ENCODE measurements at regions of chr4 and their contacts with region 1.

Region 1: GRCh38 chr4:40056716-40057585 is at the start of gene N4BP2:
- DNase-seq: peak; percentile 40 to 61
- ATAC-seq: peak; percentile 69
- H3K4me3 ChIP-seq: peak within 1 kb of the TSS; percentile 77 to 99 (median 85)
- H3K27ac ChIP-seq: peak within 1 kb of the TSS; percentile 94 to 99 (median 96)
- H3K4me1 ChIP-seq: peaks cover 3 to 13% of the 10 kb centered on the region in 2 donors
- H3K27me3 ChIP-seq: no peaks in the 10 kb centered on the region
- CTCF ChIP-seq: peak in 4 of 5 experiments; percentile 41 to 87 (median 68)
- POLR2A ChIP-seq: peak; percentile 78 to 87
- total RNA-seq, gene N4BP2: 1.3 to 7.0 (median 3.3) TPM

Region 2: DNA sequence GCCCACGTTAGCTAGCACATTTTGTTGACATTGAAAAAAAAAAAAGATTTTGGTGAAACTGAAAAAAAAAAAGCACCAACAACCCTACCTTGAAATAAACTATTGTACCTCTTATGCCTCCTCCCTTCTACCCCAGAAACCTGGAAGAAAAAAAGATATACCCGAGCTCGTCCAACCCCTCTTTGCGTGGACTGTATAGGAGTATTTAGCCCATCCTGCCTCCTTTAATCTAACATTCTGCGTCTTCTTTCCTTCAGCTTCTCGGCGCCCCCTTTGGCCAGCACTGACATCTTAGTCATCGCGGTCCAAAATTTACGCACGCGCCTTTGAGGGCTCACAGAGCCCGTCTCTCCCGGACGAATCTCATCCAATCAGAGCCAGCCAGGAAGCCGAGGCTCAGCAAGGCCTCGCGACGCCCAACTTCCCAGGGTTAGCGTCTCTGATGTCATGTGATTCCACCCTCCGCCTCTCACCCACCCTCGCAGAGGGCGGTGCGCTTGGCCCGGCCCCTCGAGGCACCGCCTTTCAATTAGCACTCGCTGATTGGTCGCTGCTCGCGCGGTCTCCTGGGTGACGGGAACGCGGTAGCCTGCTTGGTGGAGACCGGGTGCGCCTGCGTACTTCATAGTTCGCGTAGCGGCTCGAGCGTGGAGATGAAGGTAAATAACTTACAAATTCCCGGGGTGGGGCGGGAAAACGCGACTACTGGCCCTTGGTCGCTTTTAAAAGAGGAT is 874.9 kb before region 1 on chr4 and contains the start of gene WDR19:
- in situ Hi-C with region 1: no loop called
- intact Hi-C with region 1: loop called (anchors 2 kb)
- DNase-seq: peak; percentile 99
- ATAC-seq: peak; percentile 99 to 100
- H3K4me3 ChIP-seq: peak within 1 kb of the TSS; percentile 70 to 94 (median 74)
- H3K27ac ChIP-seq: peak within 1 kb of the TSS; percentile 81 to 87 (median 83)
- H3K4me1 ChIP-seq: peaks cover 9 to 16% of the 10 kb centered on the region in 2 donors
- H3K27me3 ChIP-seq: no peaks in the 10 kb centered on the region
- CTCF ChIP-seq: peak in 3 of 5 experiments; percentile 12 to 58 (median 45)
- POLR2A ChIP-seq: peak; percentile 45 to 59
- total RNA-seq, gene WDR19: 6.1 to 16.2 (median 9.6) TPM

Region 3: DNA sequence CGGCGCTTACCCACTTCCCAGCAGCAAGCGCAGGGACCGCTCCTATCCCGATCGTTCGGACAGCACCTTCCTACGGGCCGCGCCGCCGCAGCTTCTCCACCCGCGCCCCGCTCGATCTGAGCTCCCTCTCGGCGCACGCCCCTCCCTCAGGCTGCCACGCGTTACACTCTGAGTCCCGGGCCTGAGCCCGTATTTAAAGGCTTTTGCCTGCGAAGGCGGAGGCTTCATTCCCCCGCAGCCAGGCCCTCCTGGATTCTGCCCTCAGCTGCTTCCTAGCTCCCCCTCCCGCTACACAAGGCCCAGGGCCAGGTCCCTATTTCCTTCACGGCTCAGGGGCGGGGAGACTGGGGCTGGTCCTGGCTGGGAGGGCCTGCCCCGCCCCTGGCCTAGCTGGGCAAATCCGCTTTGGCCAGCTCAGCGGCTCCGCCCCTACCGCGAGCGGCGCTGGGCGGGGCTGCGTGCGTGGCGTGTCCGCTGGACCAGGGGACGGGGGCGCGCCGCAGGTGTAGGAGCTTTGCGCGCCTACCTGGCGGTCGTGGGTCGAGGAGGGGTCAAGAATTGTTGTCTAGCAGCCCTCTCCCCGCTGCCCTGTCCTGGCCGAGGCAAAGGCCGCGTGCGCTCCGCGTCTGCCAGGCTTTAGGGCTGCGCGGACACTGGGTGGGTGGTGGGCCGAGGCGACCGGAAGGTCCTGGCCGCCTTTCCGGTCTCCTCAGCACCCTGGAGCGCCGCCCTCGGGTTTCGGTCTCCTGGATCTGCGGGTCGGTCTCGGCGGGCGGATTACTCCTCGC is 529.5 kb before region 1 on chr4 and contains the start of gene UGDH:
- in situ Hi-C with region 1: no loop called
- intact Hi-C with region 1: loop called (anchors 5 kb)
- DNase-seq: peak; percentile 94 to 96
- ATAC-seq: peak; percentile 92 to 94
- H3K4me3 ChIP-seq: peak within 1 kb of the TSS; percentile 84 to 95 (median 91)
- H3K27ac ChIP-seq: peak within 1 kb of the TSS; percentile 91 to 98 (median 95)
- H3K4me1 ChIP-seq: peaks cover 24% of the 10 kb centered on the region in 2 donors
- H3K27me3 ChIP-seq: no peaks in the 10 kb centered on the region
- CTCF ChIP-seq: no peak
- POLR2A ChIP-seq: peak; percentile 88 to 89
- total RNA-seq, gene UGDH: 6.1 to 12.7 (median 8.8) TPM

Region 4: GRCh38 chr4:39963656-39964055 is 93.3 kb before region 1 on chr4:
- in situ Hi-C with region 1: no loop called
- intact Hi-C with region 1: no loop called
- DNase-seq: no peak
- ATAC-seq: no peak
- H3K4me3 ChIP-seq: no peak overlapping the region
- H3K27ac ChIP-seq: no peak overlapping the region
- H3K4me1 ChIP-seq: peaks cover 0 to 4% of the 10 kb centered on the region in 2 donors
- H3K27me3 ChIP-seq: no peaks in the 10 kb centered on the region
- CTCF ChIP-seq: no peak
- POLR2A ChIP-seq: no peak

Region 5: GRCh38 chr4:39977489-39978377 is 79.2 kb before region 1 on chr4 and contains the start of gene PDS5A:
- in situ Hi-C with region 1: no loop called
- intact Hi-C with region 1: loop called (anchors 1 kb)
- DNase-seq: peak; percentile 73 to 86
- ATAC-seq: peak; percentile 90 to 91
- H3K4me3 ChIP-seq: peak within 1 kb of the TSS; percentile 74 to 96 (median 94)
- H3K27ac ChIP-seq: peak within 1 kb of the TSS; percentile 95 to 99 (median 98)
- H3K4me1 ChIP-seq: peaks cover 10 to 11% of the 10 kb centered on the region in 2 donors
- H3K27me3 ChIP-seq: no peaks in the 10 kb centered on the region
- CTCF ChIP-seq: peak; percentile 69 to 97 (median 97)
- POLR2A ChIP-seq: peak; percentile 92 to 94
- total RNA-seq, gene PDS5A: 28.3 to 40.6 (median 36.7) TPM

Region 6: GRCh38 chr4:40316782-40317635 is 260.1 kb after region 1 on chr4:
- in situ Hi-C with region 1: loop called (anchors 10 to 25 kb)
- intact Hi-C with region 1: loop called (anchors 1 kb)
- DNase-seq: no peak
- ATAC-seq: peak; percentile 75 to 81
- H3K4me3 ChIP-seq: peak overlapping the region; percentile 15 to 45 (median 36)
- H3K27ac ChIP-seq: peak overlapping the region; percentile 13 to 65 (median 29)
- H3K4me1 ChIP-seq: peaks cover 3 to 6% of the 10 kb centered on the region in 2 donors
- H3K27me3 ChIP-seq: no peaks in the 10 kb centered on the region
- CTCF ChIP-seq: peak; percentile 47 to 77 (median 70)
- POLR2A ChIP-seq: no peak

Region 7: DNA sequence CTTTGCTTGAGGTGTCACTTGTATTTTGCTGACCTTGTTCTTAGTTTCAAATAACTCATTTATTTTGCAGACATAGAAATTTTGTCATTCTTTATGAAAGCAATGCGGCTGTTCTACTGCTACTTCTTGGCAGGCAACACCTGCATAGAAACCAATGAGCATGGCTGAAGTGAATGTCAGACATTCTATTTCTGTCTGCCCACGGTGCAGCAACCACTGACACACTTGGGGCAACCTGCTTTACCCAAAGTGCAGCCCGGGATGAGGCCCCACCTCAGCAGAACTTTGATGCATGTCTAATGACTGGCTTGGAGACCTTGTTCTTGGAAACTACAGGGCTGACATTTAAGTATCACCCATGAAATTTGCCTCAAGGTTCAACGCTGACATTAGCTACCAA is 479.1 kb after region 1 on chr4:
- in situ Hi-C with region 1: no loop called
- intact Hi-C with region 1: no loop called
- DNase-seq: no peak
- ATAC-seq: no peak
- H3K4me3 ChIP-seq: no peak overlapping the region
- H3K27ac ChIP-seq: no peak overlapping the region
- H3K4me1 ChIP-seq: no peaks in the 10 kb centered on the region
- H3K27me3 ChIP-seq: no peaks in the 10 kb centered on the region
- CTCF ChIP-seq: no peak
- POLR2A ChIP-seq: no peak